Activated CD4-positive, alpha-beta T cell treated with anti-CD3 and anti-CD28 coated beads for 36 hours (primary cell): ENCODE measurements at regions of chr20 and their contacts with region 1.

Region 1: GRCh38 chr20:46013826-46014516 is 5.3 kb downstream of the MMP9 start:
- DNase-seq: peak; percentile 85
- ATAC-seq: peak; percentile 88
- H3K4me3 Mint-ChIP-seq: peak overlapping the region; percentile 39
- H3K27ac Mint-ChIP-seq: no peak overlapping the region
- H3K4me1 Mint-ChIP-seq: peaks cover 51% of the 10 kb centered on the region
- H3K27me3 Mint-ChIP-seq: peaks cover 58% of the 10 kb centered on the region

Region 2: GRCh38 chr20:45823949-45824835 is 189.8 kb before region 1 on chr20:
- CTCF ChIA-PET with region 1: interaction called, 5 read pairs
- POLR2A ChIA-PET with region 1: no interaction called
- intact Hi-C with region 1: loop called in 1 of 2 experiments (anchors 5 kb)
- DNase-seq: peak; percentile 77
- ATAC-seq: peak; percentile 90
- H3K4me3 Mint-ChIP-seq: peak overlapping the region; percentile 54
- H3K27ac Mint-ChIP-seq: peak overlapping the region; percentile 61
- H3K4me1 Mint-ChIP-seq: peaks cover 9% of the 10 kb centered on the region
- H3K27me3 Mint-ChIP-seq: peaks cover 33% of the 10 kb centered on the region

Region 3: GRCh38 chr20:45987108-45987780 is 26.7 kb before region 1 on chr20:
- CTCF ChIA-PET with region 1: interaction called, 51 read pairs
- POLR2A ChIA-PET with region 1: no interaction called
- intact Hi-C with region 1: loop called (anchors 1 kb)
- DNase-seq: peak; percentile 90
- ATAC-seq: peak; percentile 96
- H3K4me3 Mint-ChIP-seq: no peak overlapping the region
- H3K27ac Mint-ChIP-seq: no peak overlapping the region
- H3K4me1 Mint-ChIP-seq: no peaks in the 10 kb centered on the region
- H3K27me3 Mint-ChIP-seq: no peaks in the 10 kb centered on the region

Region 4: DNA sequence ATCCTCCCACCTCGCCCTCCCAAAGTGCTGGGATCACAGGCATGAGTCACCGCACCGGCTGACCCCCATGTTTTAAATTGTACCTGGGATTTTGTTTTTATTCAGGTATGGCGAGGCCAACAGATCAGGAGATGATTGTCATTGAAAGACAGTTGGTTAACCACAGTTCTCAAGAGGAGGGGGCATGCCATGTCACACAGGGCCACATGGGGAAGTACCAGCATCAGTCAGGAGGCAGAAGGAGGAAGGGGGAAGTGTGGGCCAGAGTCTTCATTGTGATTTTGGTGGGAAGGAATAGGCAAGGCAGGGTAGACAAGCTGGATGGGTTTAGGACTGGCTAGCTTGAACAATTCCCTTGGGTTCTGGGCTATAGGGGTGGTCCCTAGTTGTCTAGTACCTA is 15.2 kb before region 1 on chr20:
- CTCF ChIA-PET with region 1: interaction called, 31 read pairs
- POLR2A ChIA-PET with region 1: no interaction called
- intact Hi-C with region 1: loop called in 1 of 2 experiments (anchors 1 kb)
- DNase-seq: peak; percentile 59
- ATAC-seq: peak; percentile 85
- H3K4me3 Mint-ChIP-seq: no peak overlapping the region
- H3K27ac Mint-ChIP-seq: peak overlapping the region; percentile 2
- H3K4me1 Mint-ChIP-seq: peaks cover 66% of the 10 kb centered on the region
- H3K27me3 Mint-ChIP-seq: no peaks in the 10 kb centered on the region

Region 5: GRCh38 chr20:46031701-46032254 is 17.8 kb after region 1 on chr20:
- CTCF ChIA-PET with region 1: interaction called, 10 read pairs
- POLR2A ChIA-PET with region 1: no interaction called
- intact Hi-C with region 1: no loop called
- DNase-seq: peak; percentile 24
- ATAC-seq: no peak
- H3K4me3 Mint-ChIP-seq: no peak overlapping the region
- H3K27ac Mint-ChIP-seq: no peak overlapping the region
- H3K4me1 Mint-ChIP-seq: no peaks in the 10 kb centered on the region
- H3K27me3 Mint-ChIP-seq: peaks cover 49% of the 10 kb centered on the region

Region 6: GRCh38 chr20:46174469-46175128 is 160.6 kb after region 1 on chr20:
- CTCF ChIA-PET with region 1: interaction called, 4 read pairs
- POLR2A ChIA-PET with region 1: no interaction called
- intact Hi-C with region 1: loop called in 1 of 2 experiments (anchors 1 kb)
- DNase-seq: peak; percentile 88
- ATAC-seq: peak; percentile 97
- H3K4me3 Mint-ChIP-seq: no peak overlapping the region
- H3K27ac Mint-ChIP-seq: no peak overlapping the region
- H3K4me1 Mint-ChIP-seq: no peaks in the 10 kb centered on the region
- H3K27me3 Mint-ChIP-seq: peaks cover 37% of the 10 kb centered on the region

Region 7: GRCh38 chr20:46349035-46349741 is 335.2 kb after region 1 on chr20:
- CTCF ChIA-PET with region 1: no interaction called
- POLR2A ChIA-PET with region 1: no interaction called
- intact Hi-C with region 1: loop called in 1 of 2 experiments (anchors 5 kb)
- DNase-seq: peak; percentile 75
- ATAC-seq: peak; percentile 60
- H3K4me3 Mint-ChIP-seq: no peak overlapping the region
- H3K27ac Mint-ChIP-seq: no peak overlapping the region
- H3K4me1 Mint-ChIP-seq: peaks cover 16% of the 10 kb centered on the region
- H3K27me3 Mint-ChIP-seq: no peaks in the 10 kb centered on the region